Prostate gland (tissue), 2 donors: ENCODE measurements at regions of chr16 and their contacts with region 1.

Region 1: GRCh38 chr16:84175350-84176081 is 11.3 kb downstream of the TAF1C start:
- DNase-seq: peak; percentile 51
- H3K4me3 ChIP-seq: no peak overlapping the region
- H3K27ac ChIP-seq: peak overlapping the region; percentile 27 to 74
- H3K4me1 ChIP-seq: peaks cover 6% of the 10 kb centered on the region
- H3K27me3 ChIP-seq: no peaks in the 10 kb centered on the region
- CTCF ChIP-seq: peak; percentile 47 to 87 (median 66)
- POLR2A ChIP-seq: no peak

Region 2: GRCh38 chr16:84084570-84085270 is 90.8 kb before region 1 on chr16:
- intact Hi-C with region 1: loop called (anchors 5 kb)
- DNase-seq: peak; percentile 74
- H3K4me3 ChIP-seq: no peak overlapping the region
- H3K27ac ChIP-seq: peak overlapping the region in 1 of 2 donors; percentile 3
- H3K4me1 ChIP-seq: peaks cover 4% of the 10 kb centered on the region
- H3K27me3 ChIP-seq: no peaks in the 10 kb centered on the region
- CTCF ChIP-seq: peak in 3 of 4 experiments; percentile 66 to 80 (median 69)
- POLR2A ChIP-seq: no peak